ENCODE measurements at regions of chrX and their contacts with region 1.

Region 1: DNA sequence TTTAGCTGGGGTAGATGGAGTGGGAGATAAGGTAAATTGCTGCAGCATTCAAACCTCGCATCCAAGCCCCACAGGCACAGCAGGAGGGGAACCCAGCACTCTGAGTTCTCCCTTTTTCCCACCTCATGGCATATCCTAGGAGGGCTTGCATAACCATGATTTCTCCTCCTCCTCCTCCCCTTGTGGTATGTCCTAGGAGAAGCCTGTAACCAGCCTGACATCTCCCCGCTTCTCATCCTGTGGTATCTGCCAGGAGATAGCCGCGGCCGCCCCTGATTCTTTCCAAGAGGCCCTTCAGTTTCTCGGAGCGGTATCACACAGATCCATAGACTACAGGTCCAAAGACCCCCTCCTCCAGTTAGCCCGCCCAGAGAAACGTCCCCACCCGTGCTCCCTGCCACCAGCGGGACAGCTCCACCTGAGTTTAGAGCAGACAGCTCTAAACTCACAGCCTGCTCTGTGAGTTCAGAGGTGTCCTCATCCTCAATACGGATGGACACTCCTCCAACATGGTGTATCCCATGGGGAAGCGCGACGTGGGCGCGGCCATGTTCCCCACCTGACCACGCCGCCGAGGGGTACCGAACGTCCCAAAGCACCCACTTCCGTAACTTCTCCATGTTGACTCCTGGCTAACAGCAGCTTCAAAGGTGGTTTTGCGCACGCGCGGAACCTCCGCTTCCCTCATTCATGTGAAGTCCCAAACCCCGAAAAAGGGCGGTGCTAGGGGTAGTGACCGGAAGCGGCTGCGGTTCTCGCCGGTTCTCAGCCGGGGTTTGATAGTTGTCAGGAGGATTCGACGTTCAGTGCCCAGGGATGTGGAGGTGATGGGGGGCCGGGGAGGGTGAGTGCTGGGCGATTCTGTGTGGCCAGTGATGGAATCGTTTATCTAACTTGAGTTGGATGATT is at the start of gene ZNF81:
- DNase-seq: peak; percentile 97
- H3K4me3 ChIP-seq: peak within 1 kb of the TSS; percentile 15 to 70 (median 46)
- H3K27ac ChIP-seq: peak within 1 kb of the TSS; percentile 51 to 85 (median 74)
- H3K4me1 ChIP-seq: peaks cover 0 to 28% (median 12%) of the 10 kb centered on the region in 6 donors
- H3K27me3 ChIP-seq: no peaks in the 10 kb centered on the region
- CTCF ChIP-seq: no peak
- POLR2A ChIP-seq: peak in 1 of 3 donors; percentile 28
- total RNA-seq, gene ZNF81: 10.6 to 17.1 (median 13.8) TPM

Region 2: DNA sequence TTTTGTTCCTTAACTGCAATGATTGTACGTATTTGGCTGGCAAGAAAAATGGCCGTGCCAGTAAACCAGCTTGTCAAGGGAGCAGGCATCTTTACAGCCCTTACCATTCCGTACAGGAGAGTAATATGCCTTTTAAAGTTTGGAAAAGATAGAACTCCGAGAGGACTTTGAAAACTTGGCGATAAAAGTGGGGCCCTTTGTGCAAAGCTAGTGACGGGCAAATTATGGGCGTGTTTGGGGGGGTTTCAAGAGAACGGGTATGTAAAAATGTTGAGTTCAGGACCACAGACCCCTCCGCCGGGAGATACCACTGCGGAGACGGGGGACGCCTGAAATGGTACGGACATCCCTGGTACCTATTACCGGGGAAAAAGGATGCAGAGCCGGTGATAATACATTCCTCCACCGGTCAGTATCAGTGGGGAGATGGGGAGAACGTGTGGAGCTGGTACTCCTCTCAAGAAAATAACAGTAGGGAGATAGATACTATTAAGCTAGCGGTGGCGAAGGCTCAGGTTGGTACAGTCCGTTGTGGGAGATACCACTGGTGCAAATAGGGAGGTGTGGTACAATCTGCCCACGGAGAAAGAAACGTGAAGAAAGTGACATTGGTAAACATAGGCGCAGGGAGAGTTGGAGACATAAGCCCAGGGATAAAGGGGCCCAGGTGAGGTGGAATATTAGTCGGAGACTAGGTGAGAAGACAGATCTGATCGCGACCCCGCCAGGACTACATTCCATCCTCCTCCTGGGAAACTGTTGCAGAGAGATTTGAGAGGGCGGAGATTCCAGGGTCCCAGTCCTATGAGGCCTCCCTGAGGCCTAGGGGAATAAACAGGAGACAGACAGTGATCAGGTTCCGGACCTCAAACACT is 184.8 kb after region 1 on chrX:
- intact Hi-C with region 1: loop called (anchors 10 kb)
- DNase-seq: peak; percentile 85
- H3K4me3 ChIP-seq: peak overlapping the region; percentile 27 to 73 (median 42)
- H3K27ac ChIP-seq: peak overlapping the region; percentile 87 to 92 (median 90)
- H3K4me1 ChIP-seq: peaks cover 0 to 17% (median 0%) of the 10 kb centered on the region in 6 donors
- H3K27me3 ChIP-seq: peaks cover 0 to 5% (median 0%) of the 10 kb centered on the region in 7 donors
- CTCF ChIP-seq: no peak
- POLR2A ChIP-seq: no peak